ENCODE measurements at regions of chr7 and their contacts with region 1.

Region 1: GRCh38 chr7:135211179-135211945 is at the start of gene WDR91:
- DNase-seq: peak; percentile 98
- ATAC-seq: peak; percentile 94
- H3K4me3 Mint-ChIP-seq: peak within 1 kb of the TSS; percentile 89
- H3K27ac Mint-ChIP-seq: peak within 1 kb of the TSS; percentile 96
- H3K4me1 Mint-ChIP-seq: peaks cover 39% of the 10 kb centered on the region
- H3K27me3 Mint-ChIP-seq: no peaks in the 10 kb centered on the region
- total RNA-seq, gene WDR91: 11.8 to 12.0 TPM

Region 2: GRCh38 chr7:134458806-134459698 is 752.3 kb before region 1 on chr7 and contains the start of gene AKR1B1:
- CTCF ChIA-PET with region 1: no interaction called
- POLR2A ChIA-PET with region 1: no interaction called
- intact Hi-C with region 1: loop called in 1 of 2 experiments (anchors 1 kb)
- DNase-seq: peak; percentile 94
- ATAC-seq: peak; percentile 92
- H3K4me3 Mint-ChIP-seq: peak within 1 kb of the TSS; percentile 83
- H3K27ac Mint-ChIP-seq: peak within 1 kb of the TSS; percentile 76
- H3K4me1 Mint-ChIP-seq: peaks cover 51% of the 10 kb centered on the region
- H3K27me3 Mint-ChIP-seq: no peaks in the 10 kb centered on the region
- total RNA-seq, gene AKR1B1: 88.1 to 120 TPM

Region 3: GRCh38 chr7:134710859-134711624 is 500.3 kb before region 1 on chr7:
- CTCF ChIA-PET with region 1: no interaction called
- POLR2A ChIA-PET with region 1: no interaction called
- intact Hi-C with region 1: loop called in 1 of 2 experiments (anchors 1 kb)
- DNase-seq: peak; percentile 80
- ATAC-seq: peak; percentile 94
- H3K4me3 Mint-ChIP-seq: peak overlapping the region; percentile 78
- H3K27ac Mint-ChIP-seq: peak overlapping the region; percentile 97
- H3K4me1 Mint-ChIP-seq: peaks cover 31% of the 10 kb centered on the region
- H3K27me3 Mint-ChIP-seq: no peaks in the 10 kb centered on the region

Region 4: DNA sequence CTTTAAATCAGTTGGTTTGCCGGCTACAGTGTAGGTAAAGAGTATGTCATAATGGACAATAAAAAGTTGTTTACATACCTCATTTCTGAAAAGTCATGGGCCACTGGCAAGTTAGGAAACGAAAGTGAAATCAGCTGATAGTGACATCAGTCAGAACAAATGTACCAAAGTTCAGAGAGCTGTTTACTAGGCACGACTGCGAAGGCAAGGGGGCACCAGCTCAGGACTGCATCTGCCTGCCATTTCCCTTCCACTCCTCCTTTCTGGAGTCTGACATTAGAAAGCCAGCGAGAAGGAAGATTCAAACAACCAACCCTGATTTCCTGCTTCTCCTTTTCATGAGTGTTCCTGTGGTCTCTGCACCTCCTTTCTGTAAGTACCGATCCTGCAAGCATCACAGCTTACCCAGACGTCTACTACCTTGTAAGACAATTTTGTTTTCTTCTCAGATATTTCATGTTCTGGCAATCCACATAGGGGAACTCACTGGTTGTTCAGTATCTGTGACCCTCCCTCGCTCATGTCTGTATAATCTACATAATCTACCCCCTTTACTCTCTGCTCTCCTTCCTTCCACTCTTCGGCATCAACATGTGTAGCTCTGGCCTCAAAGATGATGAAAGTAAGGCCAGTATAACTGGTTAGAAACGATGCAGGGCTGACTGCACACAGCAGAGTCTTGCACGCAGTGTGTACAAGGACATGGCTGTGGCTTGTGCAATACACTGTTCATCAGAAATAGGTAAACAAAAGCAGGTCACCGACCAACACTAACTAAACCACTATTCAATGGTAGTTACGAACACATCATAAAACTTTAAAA is 63.3 kb before region 1 on chr7 and contains the start of gene TMEM140:
- CTCF ChIA-PET with region 1: no interaction called
- POLR2A ChIA-PET with region 1: no interaction called
- intact Hi-C with region 1: loop called (anchors 1 to 2 kb)
- DNase-seq: peak; percentile 75
- ATAC-seq: peak; percentile 81
- H3K4me3 Mint-ChIP-seq: peak within 1 kb of the TSS; percentile 79
- H3K27ac Mint-ChIP-seq: peak within 1 kb of the TSS; percentile 92
- H3K4me1 Mint-ChIP-seq: peaks cover 52% of the 10 kb centered on the region
- H3K27me3 Mint-ChIP-seq: no peaks in the 10 kb centered on the region
- total RNA-seq, gene TMEM140: 10.8 to 12.1 TPM

Region 5: DNA sequence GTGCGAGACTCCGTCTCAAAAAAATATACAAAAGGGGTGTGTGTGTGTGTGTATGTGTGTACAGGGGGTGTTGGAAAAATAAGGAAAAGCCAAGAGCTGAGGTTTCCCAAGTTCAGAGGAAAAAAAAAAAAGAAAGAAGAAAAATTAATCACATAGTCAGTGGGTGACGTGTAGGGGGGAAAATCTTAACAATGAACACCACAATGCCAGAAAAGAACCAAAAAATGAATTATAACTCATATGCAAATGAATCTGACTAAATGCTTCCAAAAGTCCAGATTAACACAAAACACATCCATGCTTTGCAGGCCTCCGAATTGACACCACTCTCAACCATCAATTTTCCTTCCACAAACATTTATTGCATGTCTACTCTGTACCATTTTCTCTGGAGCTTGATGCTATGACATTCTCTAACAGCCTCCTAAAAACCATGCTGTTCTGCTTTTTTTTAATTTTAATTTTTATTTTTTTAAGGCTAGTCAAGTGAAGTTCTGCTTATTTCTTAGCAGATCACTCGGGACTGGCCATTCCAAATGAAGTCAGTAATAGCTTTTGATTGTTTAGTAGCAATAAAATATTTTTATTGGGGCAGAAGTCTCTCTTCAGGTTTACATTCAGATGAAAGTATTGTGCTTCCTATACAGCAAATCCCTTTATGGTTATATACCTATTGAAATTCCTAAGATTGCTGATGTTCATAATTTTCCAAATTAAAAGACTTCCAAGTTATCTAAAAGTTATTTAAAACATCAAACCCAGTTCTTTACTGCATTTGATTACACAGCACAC is 164.7 kb after region 1 on chr7:
- CTCF ChIA-PET with region 1: no interaction called
- POLR2A ChIA-PET with region 1: no interaction called
- intact Hi-C with region 1: no loop called
- DNase-seq: no peak
- ATAC-seq: no peak
- H3K4me3 Mint-ChIP-seq: no peak overlapping the region
- H3K27ac Mint-ChIP-seq: no peak overlapping the region
- H3K4me1 Mint-ChIP-seq: peaks cover 14% of the 10 kb centered on the region
- H3K27me3 Mint-ChIP-seq: no peaks in the 10 kb centered on the region

Region 6: GRCh38 chr7:135509903-135510602 is 298.7 kb after region 1 on chr7 and contains the start of gene CNOT4:
- CTCF ChIA-PET with region 1: no interaction called
- POLR2A ChIA-PET with region 1: interaction called, 8 read pairs
- intact Hi-C with region 1: loop called (anchors 1 kb)
- DNase-seq: peak; percentile 98
- ATAC-seq: peak; percentile 94
- H3K4me3 Mint-ChIP-seq: no peak within 1 kb of the TSS
- H3K27ac Mint-ChIP-seq: no peak within 1 kb of the TSS
- H3K4me1 Mint-ChIP-seq: peaks cover 17% of the 10 kb centered on the region
- H3K27me3 Mint-ChIP-seq: no peaks in the 10 kb centered on the region
- total RNA-seq, gene CNOT4: 17.7 to 22.6 TPM

Region 7: DNA sequence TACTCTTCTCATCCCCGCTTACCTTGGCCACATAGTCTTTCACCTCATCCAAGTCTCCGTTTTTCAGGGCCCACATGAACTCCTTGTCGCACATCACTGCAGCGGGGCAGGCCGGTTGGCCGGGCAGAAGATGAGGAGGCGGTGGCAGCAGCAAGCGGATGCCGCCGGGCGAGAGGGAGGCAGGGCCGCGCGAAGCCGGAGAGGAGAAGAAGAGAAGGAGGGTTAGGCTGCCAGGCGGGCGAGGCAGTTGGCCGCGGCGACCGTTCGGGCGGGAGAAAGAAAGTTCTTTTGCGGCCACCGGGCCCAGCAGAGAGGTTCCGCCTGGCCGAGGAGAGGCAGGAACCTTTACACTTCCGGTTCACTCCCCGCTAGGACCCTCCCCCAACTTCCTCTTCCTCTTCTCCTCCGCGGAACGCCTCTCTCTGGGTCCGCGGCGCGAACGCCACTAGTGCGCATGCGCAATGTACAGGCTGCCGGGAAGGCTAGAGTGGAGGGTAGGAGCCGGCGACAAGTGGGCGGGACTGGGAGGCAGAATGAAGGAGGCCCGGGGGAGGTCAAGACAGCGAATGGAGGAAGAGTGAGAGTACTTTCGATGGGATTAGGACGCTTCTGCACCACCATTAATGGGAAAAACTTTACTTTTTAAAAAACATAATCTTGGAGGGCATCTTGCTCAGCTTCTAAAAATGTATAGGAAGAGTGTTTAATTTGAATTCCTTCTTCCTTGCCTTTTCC is 765.8 kb after region 1 on chr7 and contains the start of gene MTPN:
- CTCF ChIA-PET with region 1: no interaction called
- POLR2A ChIA-PET with region 1: no interaction called
- intact Hi-C with region 1: loop called in 1 of 2 experiments (anchors 1 kb)
- DNase-seq: peak; percentile 98
- ATAC-seq: peak; percentile 87
- H3K4me3 Mint-ChIP-seq: peak within 1 kb of the TSS; percentile 99
- H3K27ac Mint-ChIP-seq: peak within 1 kb of the TSS; percentile 97
- H3K4me1 Mint-ChIP-seq: peaks cover 73% of the 10 kb centered on the region
- H3K27me3 Mint-ChIP-seq: no peaks in the 10 kb centered on the region
- total RNA-seq, gene MTPN: 123 to 136 TPM

Measured in activated CD4-positive, alpha-beta T cell treated with anti-CD3 and anti-CD28 coated beads for 36 hours (primary cell).